Aorta (tissue), 5 donors: ENCODE measurements at regions of chr13 and their contacts with region 1.

Region 1: DNA sequence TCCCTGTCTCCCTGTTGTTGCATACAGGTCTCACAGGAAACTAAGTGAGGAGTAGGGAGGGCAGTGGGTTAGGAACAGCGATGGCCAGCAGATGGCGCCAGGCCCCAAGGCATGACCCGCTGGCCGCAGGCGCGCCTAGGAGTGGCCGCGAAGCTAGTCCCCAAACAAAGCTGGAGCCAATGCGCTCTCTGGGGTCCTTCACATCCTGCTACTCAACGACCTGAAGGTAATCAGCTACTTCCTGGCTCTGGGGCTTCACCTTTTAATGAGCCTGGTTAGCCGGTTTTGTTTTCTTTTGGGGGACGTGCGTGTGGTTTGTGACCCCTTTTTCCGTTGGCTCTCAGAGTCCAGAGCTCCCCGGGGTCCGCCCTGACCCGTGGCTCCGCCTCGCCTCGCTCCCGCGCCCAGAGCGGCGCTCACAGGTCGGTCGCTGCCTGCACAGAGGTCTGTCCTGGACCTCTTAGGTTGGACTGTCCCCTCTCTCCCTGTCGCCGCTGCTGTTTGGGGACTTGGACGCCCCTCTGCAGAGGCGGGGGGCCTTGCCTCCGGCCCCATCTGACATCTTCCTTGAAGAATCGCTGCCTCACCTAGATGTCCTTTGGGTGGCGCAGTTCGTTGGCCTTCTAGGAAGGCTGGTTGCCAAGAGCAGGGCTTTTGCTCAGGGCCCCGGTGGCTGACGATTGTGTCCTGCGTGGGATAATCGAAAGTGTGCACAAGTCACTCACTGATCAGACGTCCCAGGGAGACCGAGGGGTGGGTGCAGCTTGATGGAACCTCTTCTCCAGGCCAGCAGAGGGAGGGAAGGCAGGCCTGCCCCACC is 62.1 kb upstream of the GTF3A start:
- DNase-seq: peak; percentile 90 to 96
- ATAC-seq: peak; percentile 95
- H3K4me3 ChIP-seq: peak overlapping the region; percentile 20 to 27
- H3K27ac ChIP-seq: no peak overlapping the region
- H3K4me1 ChIP-seq: no peaks in the 10 kb centered on the region
- H3K27me3 ChIP-seq: no peaks in the 10 kb centered on the region

Region 2: DNA sequence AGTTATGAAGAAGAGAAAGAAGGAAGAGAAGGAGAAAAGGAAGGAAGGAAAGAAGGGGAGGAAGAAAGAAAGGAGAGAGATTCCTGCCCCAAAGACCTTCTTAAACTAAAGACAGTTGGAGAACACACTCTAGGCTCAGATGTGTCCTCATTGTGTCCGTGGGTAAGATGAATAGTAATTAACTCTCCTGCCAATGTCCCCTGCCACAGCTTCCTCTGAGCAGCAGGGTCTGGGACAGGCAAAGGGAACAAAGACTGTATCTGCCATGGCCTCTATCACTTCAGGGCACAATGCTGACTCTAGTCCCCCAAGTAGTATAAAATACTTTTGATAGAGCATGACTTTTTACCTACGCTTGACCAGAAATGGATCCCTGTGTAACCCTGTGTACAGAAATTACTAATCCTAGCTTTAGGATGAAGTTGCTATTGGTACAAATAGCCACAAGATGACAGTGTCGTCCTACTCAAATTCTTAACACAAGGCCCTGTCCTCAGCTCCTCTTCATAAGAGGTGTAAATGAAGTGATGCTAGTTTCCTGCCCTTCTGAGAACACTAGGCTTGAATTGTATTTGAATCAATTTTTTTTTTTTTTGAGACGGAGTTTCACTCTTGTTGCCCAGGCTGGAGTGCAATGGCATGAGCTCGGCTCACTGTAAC is 415.5 kb before region 1 on chr13:
- intact Hi-C with region 1: loop called (anchors 5 to 10 kb)
- DNase-seq: no peak
- ATAC-seq: peak; percentile 66
- H3K4me3 ChIP-seq: no peak overlapping the region
- H3K27ac ChIP-seq: no peak overlapping the region
- H3K4me1 ChIP-seq: no peaks in the 10 kb centered on the region
- H3K27me3 ChIP-seq: no peaks in the 10 kb centered on the region

Region 3: GRCh38 chr13:26985285-26985878 is 376.9 kb before region 1 on chr13:
- intact Hi-C with region 1: loop called (anchors 1 to 2 kb)
- DNase-seq: no peak
- ATAC-seq: peak; percentile 89
- H3K4me3 ChIP-seq: no peak overlapping the region
- H3K27ac ChIP-seq: no peak overlapping the region
- H3K4me1 ChIP-seq: no peaks in the 10 kb centered on the region
- H3K27me3 ChIP-seq: no peaks in the 10 kb centered on the region

Region 4: DNA sequence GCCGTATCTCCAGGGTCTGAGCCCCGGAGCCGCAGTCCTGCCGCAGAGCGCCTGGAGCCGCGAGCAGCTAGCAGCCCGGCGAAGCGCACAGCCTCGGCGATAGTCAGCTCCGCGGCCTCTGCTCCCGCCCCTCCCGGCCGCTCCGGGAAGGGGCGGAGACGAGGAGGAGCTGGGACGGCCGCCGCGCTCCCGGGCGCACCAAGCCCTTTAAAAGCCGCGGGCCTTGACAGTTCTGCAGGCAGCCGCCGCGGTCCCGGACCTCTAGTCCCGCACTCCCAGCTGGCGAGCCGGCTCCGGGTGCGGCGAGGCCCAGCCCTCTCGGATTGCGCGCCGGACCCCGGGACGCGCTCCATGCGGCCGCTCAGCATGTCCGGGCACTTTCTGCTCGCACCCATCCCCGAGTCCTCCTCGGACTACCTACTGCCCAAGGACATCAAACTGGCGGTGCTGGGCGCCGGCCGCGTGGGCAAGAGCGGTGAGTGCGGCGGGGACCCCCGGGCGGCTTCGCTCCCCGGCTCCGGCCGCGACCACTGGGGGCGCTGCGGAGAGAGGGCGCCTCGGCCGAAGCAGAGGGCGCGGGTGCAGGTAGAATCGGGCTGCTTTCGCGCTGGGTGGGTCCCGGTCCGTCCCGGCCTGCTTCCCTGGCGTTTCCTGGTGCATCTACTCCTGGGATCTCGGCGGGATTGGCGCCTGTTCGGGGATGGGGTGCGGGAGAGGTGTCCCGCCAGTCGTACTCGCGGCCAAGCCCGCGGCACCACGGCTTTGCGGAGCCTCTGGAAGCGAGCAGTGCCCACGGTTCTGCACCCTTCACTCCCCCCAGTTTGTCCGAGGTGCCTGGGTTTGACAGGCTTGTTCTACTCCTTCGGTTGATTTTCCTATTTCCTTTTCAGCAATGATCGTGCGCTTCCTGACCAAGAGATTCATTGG is 91.4 kb before region 1 on chr13 and contains the start of gene RASL11A:
- intact Hi-C with region 1: loop called (anchors 5 kb)
- DNase-seq: peak; percentile 93 to 96
- ATAC-seq: peak; percentile 96
- H3K4me3 ChIP-seq: peak within 1 kb of the TSS; percentile 65 to 85
- H3K27ac ChIP-seq: peak within 1 kb of the TSS; percentile 50 to 87
- H3K4me1 ChIP-seq: no peaks in the 10 kb centered on the region
- H3K27me3 ChIP-seq: no peaks in the 10 kb centered on the region
- total RNA-seq, gene RASL11A: 40.5 to 58.2 TPM

Region 5: GRCh38 chr13:27980280-27980998 is 618.2 kb after region 1 on chr13:
- intact Hi-C with region 1: loop called (anchors 5 kb)
- DNase-seq: no peak
- ATAC-seq: no peak
- H3K4me3 ChIP-seq: no peak overlapping the region
- H3K27ac ChIP-seq: no peak overlapping the region
- H3K4me1 ChIP-seq: no peaks in the 10 kb centered on the region
- H3K27me3 ChIP-seq: no peaks in the 10 kb centered on the region